HepG2 (cell line): ENCODE measurements at regions of chr2 and their contacts with region 1.

Region 1: DNA sequence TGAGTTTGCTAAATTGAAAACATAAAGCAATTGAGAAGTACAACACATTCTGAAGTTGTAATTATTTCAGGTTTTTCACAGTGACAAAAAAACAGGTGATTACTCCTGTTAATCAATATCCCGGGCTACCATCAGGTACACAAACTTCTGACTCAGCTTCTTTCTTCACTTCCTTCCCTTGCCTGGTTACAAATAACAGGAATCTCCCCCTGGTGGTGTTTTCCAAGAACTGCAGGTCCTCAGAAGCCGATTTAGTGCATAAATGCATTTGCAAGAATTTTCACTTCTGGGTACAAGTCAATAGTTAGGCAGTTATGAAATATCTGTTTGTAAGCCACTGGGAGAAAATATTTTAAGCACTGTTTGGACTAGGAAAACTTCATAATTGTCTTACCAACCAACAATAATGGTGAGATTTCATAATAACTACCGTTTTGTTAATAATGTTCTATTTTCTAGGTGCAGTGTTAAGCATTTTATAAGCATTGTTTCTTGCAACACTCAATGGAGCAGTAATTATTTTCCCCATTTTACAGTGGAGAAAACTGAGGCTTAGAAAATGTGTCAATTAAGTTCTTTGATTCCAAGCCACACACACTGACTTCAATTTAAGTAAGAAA is 12.4 kb upstream of the GMCL1 start:
- DNase-seq: peak; percentile 94
- ATAC-seq: peak; percentile 77
- H3K4me3 ChIP-seq: no peak overlapping the region
- H3K27ac ChIP-seq: peak overlapping the region; percentile 0
- H3K4me1 ChIP-seq: peaks cover 14% of the 10 kb centered on the region
- H3K27me3 ChIP-seq: no peaks in the 10 kb centered on the region
- CTCF ChIP-seq: peak; percentile 88
- EP300 ChIP-seq: 0 out of 4 replicates have a peak, but pooled peaks of 1 of the 2 experiments have one; percentile 30
- POLR2A ChIP-seq: no peak
- RAD21 ChIP-seq: peak; percentile 88

Region 2: DNA sequence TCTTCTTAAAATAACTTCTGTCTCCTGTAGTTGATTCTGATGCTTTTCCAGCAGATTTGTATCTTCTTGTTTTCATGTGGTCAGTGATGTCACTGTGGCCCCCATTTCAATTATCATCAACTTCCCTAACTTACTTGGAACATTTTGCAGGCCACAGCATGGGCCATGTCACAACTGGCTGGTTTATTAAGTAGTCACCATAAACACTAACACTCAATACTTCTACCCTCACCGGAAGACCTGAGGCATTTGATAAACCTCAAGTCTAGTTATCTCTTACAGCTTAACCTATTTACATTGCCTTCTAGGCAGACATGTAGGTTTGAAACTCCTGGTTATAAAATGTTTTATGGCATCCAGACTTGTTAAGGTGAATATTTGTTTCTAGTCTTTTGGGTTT is 1211.1 kb before region 1 on chr2:
- CTCF ChIA-PET with region 1: no interaction called
- POLR2A ChIA-PET with region 1: no interaction called
- in situ Hi-C with region 1: no loop called
- intact Hi-C with region 1: no loop called
- DNase-seq: no peak
- ATAC-seq: no peak
- H3K4me3 ChIP-seq: no peak overlapping the region
- H3K27ac ChIP-seq: no peak overlapping the region
- H3K4me1 ChIP-seq: no peaks in the 10 kb centered on the region
- H3K27me3 ChIP-seq: no peaks in the 10 kb centered on the region
- CTCF ChIP-seq: no peak
- EP300 ChIP-seq: no peak
- POLR2A ChIP-seq: no peak
- RAD21 ChIP-seq: no peak

Region 3: DNA sequence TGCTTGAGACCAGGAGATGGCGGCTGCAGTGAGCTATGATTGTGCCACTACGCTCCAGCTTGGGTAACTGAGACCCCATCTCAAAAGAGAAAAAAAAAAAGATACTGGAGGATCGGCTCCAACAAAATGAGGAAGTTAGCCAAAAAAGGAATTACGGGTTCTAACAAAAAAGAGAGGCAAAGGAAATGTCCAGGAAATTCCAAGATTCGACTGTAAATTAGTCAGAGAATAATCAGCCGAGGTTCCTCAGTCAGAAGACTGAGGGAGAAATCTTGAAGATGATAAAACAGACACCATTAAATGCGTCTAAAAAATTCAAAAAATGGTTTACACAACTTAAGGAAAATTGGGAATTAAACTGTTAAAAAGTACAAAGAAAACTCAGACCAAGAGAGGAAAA is 263.0 kb before region 1 on chr2:
- CTCF ChIA-PET with region 1: no interaction called
- POLR2A ChIA-PET with region 1: no interaction called
- in situ Hi-C with region 1: no loop called
- intact Hi-C with region 1: loop called (anchors 1 kb)
- DNase-seq: no peak
- ATAC-seq: no peak
- H3K4me3 ChIP-seq: no peak overlapping the region
- H3K27ac ChIP-seq: no peak overlapping the region
- H3K4me1 ChIP-seq: no peaks in the 10 kb centered on the region
- H3K27me3 ChIP-seq: no peaks in the 10 kb centered on the region
- CTCF ChIP-seq: no peak
- EP300 ChIP-seq: no peak
- POLR2A ChIP-seq: no peak
- RAD21 ChIP-seq: no peak

Region 4: DNA sequence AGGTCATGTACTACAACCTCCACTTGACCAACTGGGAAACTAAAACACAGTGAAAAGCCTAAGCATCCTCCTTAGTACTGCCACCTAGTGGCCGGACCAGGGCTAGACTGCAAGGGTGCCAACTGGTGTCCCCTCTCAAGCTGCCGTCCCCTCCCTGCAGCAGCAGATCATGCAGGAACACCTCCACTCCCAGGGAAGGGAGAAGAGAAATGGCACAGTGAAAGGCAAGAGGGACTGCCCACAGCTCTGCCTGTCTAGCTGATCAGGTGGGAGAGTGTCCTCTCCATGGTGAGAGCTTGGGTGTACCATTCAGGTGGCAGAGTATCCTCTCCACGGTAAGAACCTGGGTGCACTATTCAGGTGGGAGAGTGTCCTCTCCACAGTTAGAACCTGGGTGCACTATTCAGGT is 251.6 kb before region 1 on chr2:
- CTCF ChIA-PET with region 1: no interaction called
- POLR2A ChIA-PET with region 1: no interaction called
- in situ Hi-C with region 1: loop called (anchors 10 kb)
- intact Hi-C with region 1: no loop called
- DNase-seq: peak; percentile 61
- ATAC-seq: peak; percentile 94
- H3K4me3 ChIP-seq: no peak overlapping the region
- H3K27ac ChIP-seq: no peak overlapping the region
- H3K4me1 ChIP-seq: peaks cover 20% of the 10 kb centered on the region
- H3K27me3 ChIP-seq: no peaks in the 10 kb centered on the region
- CTCF ChIP-seq: peak; percentile 86
- EP300 ChIP-seq: no peak
- POLR2A ChIP-seq: no peak
- RAD21 ChIP-seq: peak; percentile 72

Region 5: DNA sequence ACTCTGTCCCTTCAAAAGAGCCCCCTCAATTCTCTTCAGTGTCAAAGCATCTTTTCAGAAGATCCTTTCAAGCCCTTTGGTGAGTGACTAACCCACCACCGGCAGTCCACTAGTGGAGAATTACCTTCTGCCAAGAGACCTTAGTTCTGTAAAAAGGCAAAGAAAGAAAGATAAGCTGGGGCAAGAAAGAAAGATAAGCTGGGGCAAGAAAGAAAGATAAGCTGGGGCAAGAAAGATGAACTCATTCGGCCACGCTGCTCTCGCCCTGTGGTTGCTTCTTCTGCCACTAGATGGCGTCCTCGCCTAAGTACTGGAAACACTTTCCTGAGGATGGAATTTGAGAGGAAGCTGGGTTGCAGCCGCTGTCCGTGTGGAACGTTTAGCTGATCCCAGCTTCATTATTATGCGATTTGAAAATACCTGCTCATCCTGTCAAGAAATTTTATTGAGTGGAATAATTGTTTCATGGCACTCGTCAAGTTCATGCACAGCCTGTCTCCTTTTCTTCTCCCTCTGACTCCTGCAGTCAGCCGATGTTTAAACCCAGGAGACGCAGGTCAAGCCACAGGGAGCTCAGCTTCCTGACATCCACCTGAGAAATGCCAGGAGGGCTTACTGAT is 92.4 kb before region 1 on chr2:
- CTCF ChIA-PET with region 1: interaction called, 105 read pairs
- POLR2A ChIA-PET with region 1: interaction called, 17 read pairs
- in situ Hi-C with region 1: loop called (anchors 5 kb)
- intact Hi-C with region 1: loop called (anchors 1 kb)
- DNase-seq: peak; percentile 77
- ATAC-seq: peak; percentile 91
- H3K4me3 ChIP-seq: peak overlapping the region; percentile 42 to 65 (median 58)
- H3K27ac ChIP-seq: no peak overlapping the region
- H3K4me1 ChIP-seq: peaks cover 30% of the 10 kb centered on the region
- H3K27me3 ChIP-seq: no peaks in the 10 kb centered on the region
- CTCF ChIP-seq: peak; percentile 99
- EP300 ChIP-seq: no peak
- POLR2A ChIP-seq: no peak
- RAD21 ChIP-seq: peak; percentile 97

Region 6: GRCh38 chr2:69781321-69782248 is 35.4 kb before region 1 on chr2:
- CTCF ChIA-PET with region 1: interaction called, 5 read pairs
- POLR2A ChIA-PET with region 1: no interaction called
- in situ Hi-C with region 1: no loop called
- intact Hi-C with region 1: loop called (anchors 5 kb)
- DNase-seq: peak; percentile 97
- ATAC-seq: peak; percentile 91
- H3K4me3 ChIP-seq: peak overlapping the region in 2 of 3 experiments; percentile 14 to 26; a peak in 2 of 6 replicates
- H3K27ac ChIP-seq: peak overlapping the region; percentile 66
- H3K4me1 ChIP-seq: peaks cover 66% of the 10 kb centered on the region
- H3K27me3 ChIP-seq: no peaks in the 10 kb centered on the region
- CTCF ChIP-seq: no peak
- EP300 ChIP-seq: peak; percentile 95 to 99; a peak in 3 of 4 replicates
- POLR2A ChIP-seq: peak in 1 of 2 experiments; percentile 37; a peak in 2 of 4 replicates
- RAD21 ChIP-seq: no peak